Activated T-helper 1 cell treated with anti-CD3 and anti-CD28 coated beads, Interleukin-12 subunit alpha, Interleukin-12 subunit beta, Interleukin-2, Interleukin-4 antibody, amounts not matched to agents 30 ng/mL and 10 ng/mL and 1 ng/mL, durations not matched to agents 14 hours and 24 hours and 36 hours (primary cell): ENCODE measurements at regions of chr6 and their contacts with region 1.

Region 1: GRCh38 chr6:85354761-85355618 is 94.9 kb upstream of the NT5E start:
- DNase-seq: peak; percentile 43
- H3K4me3 Mint-ChIP-seq: no peak overlapping the region
- H3K27ac Mint-ChIP-seq: no peak overlapping the region
- H3K4me1 Mint-ChIP-seq: no peaks in the 10 kb centered on the region
- H3K27me3 Mint-ChIP-seq: no peaks in the 10 kb centered on the region

Region 2: GRCh38 chr6:85273870-85274269 is 81.1 kb before region 1 on chr6:
- intact Hi-C with region 1: no loop called
- DNase-seq: no peak
- H3K4me3 Mint-ChIP-seq: no peak overlapping the region
- H3K27ac Mint-ChIP-seq: no peak overlapping the region
- H3K4me1 Mint-ChIP-seq: no peaks in the 10 kb centered on the region
- H3K27me3 Mint-ChIP-seq: no peaks in the 10 kb centered on the region

Region 3: DNA sequence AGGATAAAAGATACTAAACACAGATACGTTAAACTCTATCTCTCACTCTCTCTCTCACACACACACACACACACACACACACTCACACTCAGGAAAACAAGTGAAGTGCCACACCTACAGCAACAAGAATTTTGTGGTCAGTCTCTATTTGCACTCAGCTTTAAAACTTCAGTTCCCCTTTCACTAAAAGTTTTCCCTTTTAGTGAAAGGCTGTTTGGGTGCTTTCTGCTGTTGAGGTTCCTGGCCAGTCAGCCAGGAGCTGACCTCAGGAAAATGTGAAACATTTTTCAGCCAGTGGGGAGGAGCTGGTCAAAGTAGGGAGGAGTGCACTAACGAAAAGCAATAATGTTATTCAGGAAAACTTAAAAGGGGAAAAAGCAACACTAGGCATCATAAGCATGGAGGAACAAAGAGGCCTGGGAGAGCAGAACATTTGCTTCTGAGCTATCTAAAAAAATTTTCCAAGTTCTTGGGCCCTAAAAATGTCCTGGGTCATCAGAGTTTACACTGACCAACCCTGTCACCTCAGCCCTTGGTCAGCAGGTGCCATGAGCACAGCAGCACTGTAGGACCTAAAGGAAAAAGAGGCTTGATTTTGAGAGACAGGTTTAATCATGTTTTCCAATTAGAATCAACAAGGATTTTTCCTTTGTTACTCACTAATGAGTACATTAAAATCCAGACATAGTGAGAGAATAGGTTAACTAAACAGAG is 64.2 kb after region 1 on chr6:
- intact Hi-C with region 1: loop called (anchors 5 kb)
- DNase-seq: no peak
- H3K4me3 Mint-ChIP-seq: no peak overlapping the region
- H3K27ac Mint-ChIP-seq: no peak overlapping the region
- H3K4me1 Mint-ChIP-seq: peaks cover 38% of the 10 kb centered on the region
- H3K27me3 Mint-ChIP-seq: peaks cover 6% of the 10 kb centered on the region

Region 4: DNA sequence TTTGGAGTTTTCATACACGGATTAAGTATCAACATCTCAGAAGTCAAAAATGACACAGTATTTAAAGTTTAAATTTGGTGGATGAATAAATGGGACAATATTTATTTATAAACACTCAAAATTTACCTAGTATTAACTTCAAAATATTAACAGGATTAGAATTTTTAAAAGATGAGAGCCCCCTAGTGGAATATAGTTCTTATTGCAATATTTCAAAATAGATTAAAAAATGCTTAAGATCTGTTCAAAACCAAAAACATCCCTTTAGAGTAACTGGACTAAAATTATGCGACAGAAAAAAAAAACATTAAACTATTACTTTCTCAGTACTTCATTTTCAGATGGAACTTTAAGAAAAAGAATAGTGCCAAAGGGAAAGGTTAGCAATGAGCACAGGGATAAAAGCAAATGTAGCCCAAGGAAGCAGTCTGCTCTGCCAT is 182.1 kb after region 1 on chr6:
- intact Hi-C with region 1: loop called (anchors 1 kb)
- DNase-seq: no peak
- H3K4me3 Mint-ChIP-seq: no peak overlapping the region
- H3K27ac Mint-ChIP-seq: no peak overlapping the region
- H3K4me1 Mint-ChIP-seq: no peaks in the 10 kb centered on the region
- H3K27me3 Mint-ChIP-seq: no peaks in the 10 kb centered on the region